ENCODE measurements at regions of chr2 and their contacts with region 1.

Region 1: GRCh38 chr2:27191053-27191829 is 20.6 kb upstream of the ATRAID start:
- DNase-seq: peak; percentile 67
- ATAC-seq: peak; percentile 93
- H3K4me3 ChIP-seq: no peak overlapping the region
- H3K27ac ChIP-seq: no peak overlapping the region
- H3K4me1 ChIP-seq: no peaks in the 10 kb centered on the region
- H3K27me3 ChIP-seq: no peaks in the 10 kb centered on the region
- CTCF ChIP-seq: peak; percentile 71

Region 2: GRCh38 chr2:26964446-26965130 is 226.7 kb before region 1 on chr2:
- CTCF ChIA-PET with region 1: no interaction called
- POLR2A ChIA-PET with region 1: no interaction called
- intact Hi-C with region 1: loop called (anchors 5 kb)
- DNase-seq: no peak
- ATAC-seq: no peak
- H3K4me3 ChIP-seq: no peak overlapping the region
- H3K27ac ChIP-seq: peak overlapping the region; percentile 69
- H3K4me1 ChIP-seq: peaks cover 30% of the 10 kb centered on the region
- H3K27me3 ChIP-seq: no peaks in the 10 kb centered on the region
- CTCF ChIP-seq: no peak

Region 3: GRCh38 chr2:27095745-27096651 is 95.2 kb before region 1 on chr2:
- CTCF ChIA-PET with region 1: interaction called, 7 read pairs
- POLR2A ChIA-PET with region 1: no interaction called
- intact Hi-C with region 1: loop called (anchors 1 kb)
- DNase-seq: peak; percentile 23
- ATAC-seq: peak; percentile 36; the same call in 1 of the 2 replicates
- H3K4me3 ChIP-seq: no peak overlapping the region
- H3K27ac ChIP-seq: no peak overlapping the region
- H3K4me1 ChIP-seq: no peaks in the 10 kb centered on the region
- H3K27me3 ChIP-seq: no peaks in the 10 kb centered on the region
- CTCF ChIP-seq: no peak

Region 4: GRCh38 chr2:27118525-27119329 is 72.5 kb before region 1 on chr2 and contains the start of gene CGREF1:
- CTCF ChIA-PET with region 1: interaction called, 11 read pairs
- POLR2A ChIA-PET with region 1: no interaction called
- intact Hi-C with region 1: no loop called
- DNase-seq: peak; percentile 20
- ATAC-seq: peak; percentile 64
- H3K4me3 ChIP-seq: peak within 1 kb of the TSS; percentile 76
- H3K27ac ChIP-seq: no peak within 1 kb of the TSS
- H3K4me1 ChIP-seq: no peaks in the 10 kb centered on the region
- H3K27me3 ChIP-seq: no peaks in the 10 kb centered on the region
- CTCF ChIP-seq: no peak
- total RNA-seq, gene CGREF1: 18.7 and 22.6 TPM in 2 replicates

Region 5: DNA sequence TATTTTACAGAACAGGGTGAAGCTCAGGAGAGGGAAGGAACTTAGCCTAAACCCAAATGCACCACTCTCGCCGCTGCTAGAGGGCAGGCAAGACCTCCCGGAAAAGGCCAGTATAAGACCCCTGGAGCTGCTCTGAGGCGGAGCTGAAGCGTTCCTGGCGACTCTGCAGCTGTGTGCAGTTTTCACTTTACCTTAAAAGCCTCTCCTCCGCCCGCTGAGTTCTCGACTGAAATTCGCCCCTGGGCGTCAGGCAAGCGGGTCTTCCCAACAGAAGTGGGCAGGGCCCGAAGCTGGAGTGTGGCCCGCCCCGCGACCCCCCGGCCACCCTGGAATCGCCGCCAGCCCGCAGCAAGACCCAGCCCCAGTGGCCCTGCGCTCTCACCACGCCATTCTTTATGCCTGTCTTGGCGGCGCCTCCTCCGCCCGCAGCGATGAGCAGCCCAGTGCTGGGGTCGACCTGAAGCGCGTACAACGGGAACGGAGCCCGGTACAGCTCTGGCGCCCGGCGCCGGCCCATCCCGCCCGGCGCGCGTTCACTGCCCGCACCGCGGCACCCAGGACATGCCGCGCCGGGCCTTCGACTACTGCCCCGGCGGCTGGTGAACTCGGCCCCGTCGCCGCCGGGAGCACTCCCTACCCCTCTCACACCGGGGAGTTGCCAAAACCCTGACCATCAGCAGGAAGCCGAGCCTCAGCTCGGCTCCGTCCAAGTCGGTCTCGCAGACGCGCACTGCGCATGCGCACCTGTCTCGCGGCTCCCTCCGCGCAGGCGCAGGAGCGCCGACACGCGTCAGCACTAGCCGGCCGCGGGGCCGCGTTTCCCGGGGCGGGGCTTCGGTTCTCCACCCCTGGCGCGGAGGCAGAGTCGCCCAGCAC is 57.1 kb before region 1 on chr2 and contains the start of gene PREB:
- CTCF ChIA-PET with region 1: no interaction called
- POLR2A ChIA-PET with region 1: interaction called, 13 read pairs
- intact Hi-C with region 1: no loop called
- DNase-seq: peak; percentile 98
- ATAC-seq: peak; percentile 93
- H3K4me3 ChIP-seq: peak within 1 kb of the TSS; percentile 97
- H3K27ac ChIP-seq: no peak within 1 kb of the TSS
- H3K4me1 ChIP-seq: peaks cover 9% of the 10 kb centered on the region
- H3K27me3 ChIP-seq: no peaks in the 10 kb centered on the region
- CTCF ChIP-seq: 0 out of 2 replicates have a peak, but pooled peaks have one; percentile 27
- total RNA-seq, gene PREB: 85.6 and 103 TPM in 2 replicates

Region 6: DNA sequence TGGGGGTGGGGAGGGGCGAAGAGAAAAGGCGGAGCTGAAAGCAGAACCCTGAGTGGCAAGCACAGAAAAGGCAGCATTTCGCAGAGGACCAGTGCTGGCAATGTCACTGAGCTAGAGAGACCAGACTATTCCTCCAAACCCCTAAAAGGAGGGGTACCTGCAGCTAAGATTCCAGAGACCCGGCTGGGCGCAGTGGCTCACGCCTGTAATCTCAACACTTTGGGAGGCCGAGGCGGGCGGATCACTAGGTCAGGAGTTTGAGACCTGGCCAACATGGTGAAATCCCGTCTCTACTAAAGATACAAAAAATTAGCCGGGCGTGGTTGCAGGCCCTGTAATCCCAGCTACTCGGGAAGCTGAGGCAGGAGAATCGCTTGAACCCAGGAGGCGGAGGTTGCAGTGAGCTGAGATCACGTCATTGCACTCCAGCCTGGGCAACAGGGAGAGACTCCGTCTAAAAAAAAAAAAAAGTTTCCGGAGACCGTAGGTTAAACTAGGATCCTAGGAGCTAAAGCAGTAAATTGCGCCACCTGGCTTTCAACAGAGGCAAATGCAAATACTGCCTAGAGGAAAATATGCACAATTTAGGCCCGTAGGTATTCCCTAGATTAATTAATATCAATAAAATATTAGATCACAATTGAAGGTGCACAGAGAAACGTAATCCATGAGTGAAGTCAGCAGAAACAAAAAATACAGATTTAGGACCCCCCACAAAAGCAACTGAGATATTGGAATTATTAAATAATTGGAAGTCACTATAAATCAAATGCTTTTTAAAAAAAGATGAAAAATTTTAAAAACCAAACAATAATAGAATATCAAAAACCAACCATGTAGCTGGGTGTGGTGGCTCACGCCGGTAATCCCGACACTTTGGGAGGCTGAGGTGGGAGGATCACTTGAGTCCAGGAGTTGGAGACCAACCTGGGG is 112.1 kb after region 1 on chr2:
- CTCF ChIA-PET with region 1: no interaction called
- POLR2A ChIA-PET with region 1: no interaction called
- intact Hi-C with region 1: loop called (anchors 1 kb)
- DNase-seq: peak; percentile 82
- ATAC-seq: peak; percentile 49
- H3K4me3 ChIP-seq: peak overlapping the region; percentile 62
- H3K27ac ChIP-seq: no peak overlapping the region
- H3K4me1 ChIP-seq: peaks cover 12% of the 10 kb centered on the region
- H3K27me3 ChIP-seq: no peaks in the 10 kb centered on the region
- CTCF ChIP-seq: peak; percentile 81